Activated CD4-positive, alpha-beta memory T cell treated with anti-CD3 and anti-CD28 coated beads for 36 hours (primary cell): ENCODE measurements at regions of chr9 and their contacts with region 1.

Region 1: GRCh38 chr9:132249123-132249522 is 87.3 kb downstream of the NTNG2 start:
- DNase-seq: no peak
- H3K4me3 Mint-ChIP-seq: no peak overlapping the region
- H3K27ac Mint-ChIP-seq: no peak overlapping the region
- H3K4me1 Mint-ChIP-seq: no peaks in the 10 kb centered on the region
- H3K27me3 Mint-ChIP-seq: peaks cover 4% of the 10 kb centered on the region

Region 2: DNA sequence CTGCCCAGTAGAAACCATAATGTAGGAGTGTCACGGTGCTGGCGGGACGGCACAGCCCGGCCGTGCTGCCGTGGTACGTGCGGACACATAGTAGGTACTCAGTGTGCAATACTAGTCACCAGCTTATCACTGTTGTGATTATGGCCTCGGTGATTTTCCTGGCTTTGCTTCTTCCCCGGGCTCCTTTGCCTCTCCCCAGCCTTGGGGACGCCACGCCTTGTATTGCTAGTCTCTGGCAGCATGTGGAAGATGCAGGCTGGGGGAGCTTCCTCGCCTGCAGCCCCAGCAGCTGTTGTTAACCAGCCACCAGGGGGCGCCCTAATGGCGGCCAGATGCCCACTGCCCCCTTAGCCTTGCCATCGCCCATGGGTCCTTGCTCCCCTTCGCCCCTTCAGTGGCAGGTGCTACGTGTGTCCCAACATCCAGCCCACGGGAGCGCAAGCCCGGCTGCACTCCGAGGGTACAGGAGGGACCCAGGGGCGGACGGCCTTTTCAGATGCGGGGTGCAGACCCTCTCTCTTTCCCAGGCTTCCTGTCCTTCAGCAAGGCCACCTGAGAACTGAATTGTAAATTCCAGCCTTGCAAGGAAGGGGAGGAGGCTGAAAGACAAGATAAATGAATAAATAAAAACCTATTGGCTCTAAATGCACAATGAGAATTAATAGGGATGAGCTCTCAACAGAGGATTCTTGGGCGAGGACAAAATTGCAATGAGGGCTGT is 79.3 kb before region 1 on chr9:
- CTCF ChIA-PET with region 1: interaction called, 19 read pairs
- POLR2A ChIA-PET with region 1: no interaction called
- intact Hi-C with region 1: no loop called
- DNase-seq: peak; percentile 64
- H3K4me3 Mint-ChIP-seq: no peak overlapping the region
- H3K27ac Mint-ChIP-seq: no peak overlapping the region
- H3K4me1 Mint-ChIP-seq: no peaks in the 10 kb centered on the region
- H3K27me3 Mint-ChIP-seq: peaks cover 40% of the 10 kb centered on the region

Region 3: GRCh38 chr9:132260846-132261245 is 11.7 kb after region 1 on chr9:
- CTCF ChIA-PET with region 1: interaction called, 15 read pairs
- POLR2A ChIA-PET with region 1: no interaction called
- intact Hi-C with region 1: no loop called
- DNase-seq: no peak
- H3K4me3 Mint-ChIP-seq: no peak overlapping the region
- H3K27ac Mint-ChIP-seq: no peak overlapping the region
- H3K4me1 Mint-ChIP-seq: peaks cover 8% of the 10 kb centered on the region
- H3K27me3 Mint-ChIP-seq: no peaks in the 10 kb centered on the region

Region 4: GRCh38 chr9:132268725-132269352 is 19.7 kb after region 1 on chr9:
- CTCF ChIA-PET with region 1: interaction called, 10 read pairs
- POLR2A ChIA-PET with region 1: no interaction called
- intact Hi-C with region 1: no loop called
- DNase-seq: peak; percentile 82
- H3K4me3 Mint-ChIP-seq: no peak overlapping the region
- H3K27ac Mint-ChIP-seq: peak overlapping the region; percentile 77
- H3K4me1 Mint-ChIP-seq: peaks cover 7% of the 10 kb centered on the region
- H3K27me3 Mint-ChIP-seq: no peaks in the 10 kb centered on the region

Region 5: DNA sequence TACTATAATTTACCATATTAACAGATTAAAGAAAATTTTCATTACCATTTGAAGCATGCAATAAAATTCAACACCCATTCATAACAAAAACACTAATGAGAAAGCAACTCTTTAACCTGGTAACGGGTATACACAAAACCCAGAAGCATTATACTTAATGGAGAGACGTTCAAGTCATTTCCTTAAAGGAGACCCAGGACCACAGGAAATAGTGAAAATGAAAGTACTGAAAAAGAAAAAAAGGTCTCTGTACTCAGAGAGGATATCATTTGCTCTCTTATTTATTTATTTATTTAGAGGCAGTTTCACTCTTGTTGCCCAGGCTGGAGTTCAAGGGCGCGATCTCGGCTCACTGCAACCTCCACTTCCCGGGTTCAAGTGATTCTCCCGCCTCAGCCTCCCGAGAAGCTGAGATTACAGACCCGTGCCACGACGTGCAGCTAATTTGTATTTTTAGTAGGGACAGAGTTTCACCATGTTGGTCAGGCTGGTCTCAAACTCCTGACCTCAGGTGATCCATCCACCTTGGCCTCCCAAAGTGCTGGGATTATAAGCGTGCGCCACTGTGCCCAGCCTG is 44.1 kb after region 1 on chr9:
- CTCF ChIA-PET with region 1: no interaction called
- POLR2A ChIA-PET with region 1: no interaction called
- intact Hi-C with region 1: no loop called
- DNase-seq: no peak
- H3K4me3 Mint-ChIP-seq: no peak overlapping the region
- H3K27ac Mint-ChIP-seq: peak overlapping the region; percentile 33
- H3K4me1 Mint-ChIP-seq: peaks cover 36% of the 10 kb centered on the region
- H3K27me3 Mint-ChIP-seq: no peaks in the 10 kb centered on the region